GM10248 (cell line): ENCODE measurements at regions of chr3 and their contacts with region 1.

Region 1: GRCh38 chr3:14461748-14462324 is 59.4 kb downstream of the SLC6A6 start:
- DNase-seq: peak; percentile 74
- CTCF ChIP-seq: peak; percentile 74

Region 2: GRCh38 chr3:14261229-14261628 is 200.6 kb before region 1 on chr3:
- CTCF ChIA-PET with region 1: interaction called, 63 read pairs
- POLR2A ChIA-PET with region 1: no interaction called
- DNase-seq: peak; percentile 85
- CTCF ChIP-seq: peak; percentile 99

Region 3: DNA sequence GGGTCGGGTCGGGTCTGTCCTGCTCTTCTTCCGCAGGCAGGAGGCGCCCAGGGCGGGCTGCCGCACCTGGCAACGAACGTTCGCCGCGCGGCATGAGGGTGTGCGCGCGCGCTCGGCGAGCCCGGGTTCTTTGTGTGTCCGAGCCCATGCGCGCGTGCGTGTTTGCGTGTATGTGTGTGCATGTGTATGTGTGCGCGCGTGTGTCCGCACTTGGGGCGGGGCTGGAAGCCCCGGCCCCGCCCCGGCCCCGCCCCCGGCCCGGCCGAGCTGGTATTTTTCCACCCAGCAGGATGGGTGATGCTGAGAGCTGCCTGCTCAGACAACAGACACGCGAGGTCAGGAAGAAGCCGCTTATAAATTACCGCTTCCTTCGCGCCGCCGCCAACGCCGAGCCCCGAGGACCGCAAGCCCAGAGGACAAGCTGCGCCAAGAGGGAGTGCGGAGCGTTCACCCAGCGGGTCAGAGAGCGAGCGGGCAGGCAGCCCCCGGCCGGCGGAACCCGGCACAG is 59.5 kb before region 1 on chr3 and contains the start of gene SLC6A6:
- CTCF ChIA-PET with region 1: interaction called, 17 read pairs
- POLR2A ChIA-PET with region 1: no interaction called
- DNase-seq: peak; percentile 91
- CTCF ChIP-seq: peak; percentile 41

Region 4: DNA sequence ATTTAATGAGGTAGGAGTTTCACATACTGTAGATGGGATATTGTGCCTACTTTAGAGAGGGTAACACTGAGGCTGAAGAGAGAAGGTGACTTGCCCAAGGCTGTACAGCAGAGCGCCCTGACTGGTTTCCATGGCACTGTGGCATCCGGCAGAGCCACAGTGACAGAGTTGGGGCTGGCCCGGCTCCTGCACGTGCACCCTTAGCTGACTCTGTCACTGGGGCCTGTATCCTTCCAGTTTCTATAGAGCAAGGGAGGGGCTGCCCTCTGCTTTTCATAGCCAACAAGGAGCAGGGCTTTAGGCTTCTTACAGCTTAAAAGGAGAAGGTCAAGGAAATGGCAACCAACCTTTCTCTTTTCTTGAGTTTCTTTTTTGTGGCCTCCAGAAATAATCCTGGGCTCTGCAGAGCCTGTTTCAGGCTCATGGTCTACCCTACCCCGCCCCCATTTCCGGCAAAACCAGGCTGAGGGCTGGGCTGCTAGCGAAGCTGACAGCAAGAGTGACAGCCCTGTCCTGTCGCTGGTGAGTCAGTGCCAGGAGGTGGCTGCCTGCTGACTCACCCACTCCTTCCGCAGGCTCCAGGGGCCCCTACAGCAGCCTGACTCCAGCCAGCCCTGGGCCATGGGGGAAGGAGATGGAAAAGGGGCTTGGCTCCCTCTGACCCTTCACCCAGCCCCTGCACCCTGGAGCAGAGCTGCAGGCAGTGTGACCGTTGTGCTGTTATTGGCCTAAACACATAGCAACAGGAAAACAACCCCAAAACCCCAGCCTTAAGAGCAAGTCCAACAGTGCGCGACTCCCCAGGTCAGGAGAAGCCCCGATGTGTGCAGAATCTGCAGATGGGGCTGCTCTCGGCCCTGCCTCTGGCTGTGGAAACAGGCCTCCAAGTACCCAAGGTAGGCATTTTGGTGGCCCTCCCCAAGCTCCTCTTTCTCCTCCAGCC is 29.7 kb before region 1 on chr3:
- CTCF ChIA-PET with region 1: interaction called, 11 read pairs
- POLR2A ChIA-PET with region 1: no interaction called
- DNase-seq: peak; percentile 93
- CTCF ChIP-seq: no peak

Region 5: DNA sequence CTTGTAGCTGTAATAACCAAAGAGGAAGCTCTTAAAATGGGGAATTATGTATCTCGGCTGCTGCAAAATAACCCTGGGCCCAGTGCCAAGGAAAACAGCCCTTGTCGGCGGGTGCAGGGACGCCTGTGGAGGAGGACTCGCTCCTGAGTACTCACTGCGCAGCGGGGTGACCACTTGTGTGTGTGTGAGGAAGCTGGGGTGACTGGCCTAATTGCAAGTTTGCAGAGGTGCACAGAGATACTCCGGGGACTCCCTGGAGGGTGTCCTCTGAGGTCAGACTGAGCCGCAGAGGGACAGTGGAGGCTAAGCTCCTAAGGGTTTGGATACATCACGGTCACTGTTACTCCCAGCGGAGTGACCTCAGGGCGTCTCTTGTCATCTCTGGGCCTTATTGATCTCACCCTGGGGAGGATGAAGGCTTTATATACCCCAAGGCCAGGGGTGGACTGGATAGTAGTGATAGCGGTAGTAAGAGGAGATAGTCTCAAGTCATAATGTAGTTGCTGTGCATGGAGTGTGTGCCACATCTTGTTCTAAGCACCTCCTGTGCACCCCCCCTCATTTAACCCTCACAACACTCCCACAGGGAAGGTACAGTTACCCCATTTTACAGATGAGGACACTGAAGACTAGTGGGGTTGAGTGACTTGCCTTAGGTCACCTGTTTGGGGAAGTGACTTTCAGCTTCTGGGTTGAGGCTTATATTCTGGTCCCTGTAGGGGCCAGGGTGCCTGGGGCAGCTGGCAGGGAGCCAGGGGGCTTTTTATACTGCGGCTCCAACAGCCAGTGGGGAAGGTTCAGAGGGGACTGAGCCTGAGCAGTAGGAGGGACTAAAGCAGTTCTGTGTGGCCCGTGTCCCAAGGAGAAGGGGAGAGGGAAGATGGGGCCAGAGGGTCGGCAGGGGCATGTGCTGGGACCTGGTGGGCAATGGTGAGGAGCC is 22.0 kb before region 1 on chr3:
- CTCF ChIA-PET with region 1: interaction called, 10 read pairs
- POLR2A ChIA-PET with region 1: no interaction called
- DNase-seq: no peak
- CTCF ChIP-seq: no peak

Region 6: DNA sequence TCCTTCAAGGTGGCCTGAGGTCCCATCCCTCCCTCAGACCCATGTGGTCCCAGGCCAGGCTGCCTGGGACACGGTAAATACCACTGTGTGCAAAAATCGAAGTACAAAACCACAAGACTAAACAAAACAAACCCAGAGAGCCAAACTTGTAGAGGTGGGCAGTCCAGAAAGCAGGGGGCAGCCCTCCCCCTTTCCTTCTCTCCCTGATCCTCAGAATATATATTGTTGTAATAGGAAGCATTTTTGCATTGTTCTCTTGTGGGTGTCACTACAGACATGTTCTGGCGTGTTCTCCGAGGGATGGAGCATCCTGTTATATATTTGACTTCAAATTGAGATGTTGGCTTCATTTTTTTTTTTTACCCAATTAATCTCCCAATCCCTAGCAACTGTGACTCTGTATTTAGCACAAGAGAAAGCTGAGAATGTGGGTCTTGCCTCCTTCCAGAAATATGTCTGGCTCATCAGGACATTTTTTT is 26.8 kb after region 1 on chr3:
- CTCF ChIA-PET with region 1: no interaction called
- POLR2A ChIA-PET with region 1: no interaction called
- DNase-seq: no peak
- CTCF ChIP-seq: no peak